Natural killer cell (primary cell): ENCODE measurements at regions of chr13 and their contacts with region 1.

Region 1: DNA sequence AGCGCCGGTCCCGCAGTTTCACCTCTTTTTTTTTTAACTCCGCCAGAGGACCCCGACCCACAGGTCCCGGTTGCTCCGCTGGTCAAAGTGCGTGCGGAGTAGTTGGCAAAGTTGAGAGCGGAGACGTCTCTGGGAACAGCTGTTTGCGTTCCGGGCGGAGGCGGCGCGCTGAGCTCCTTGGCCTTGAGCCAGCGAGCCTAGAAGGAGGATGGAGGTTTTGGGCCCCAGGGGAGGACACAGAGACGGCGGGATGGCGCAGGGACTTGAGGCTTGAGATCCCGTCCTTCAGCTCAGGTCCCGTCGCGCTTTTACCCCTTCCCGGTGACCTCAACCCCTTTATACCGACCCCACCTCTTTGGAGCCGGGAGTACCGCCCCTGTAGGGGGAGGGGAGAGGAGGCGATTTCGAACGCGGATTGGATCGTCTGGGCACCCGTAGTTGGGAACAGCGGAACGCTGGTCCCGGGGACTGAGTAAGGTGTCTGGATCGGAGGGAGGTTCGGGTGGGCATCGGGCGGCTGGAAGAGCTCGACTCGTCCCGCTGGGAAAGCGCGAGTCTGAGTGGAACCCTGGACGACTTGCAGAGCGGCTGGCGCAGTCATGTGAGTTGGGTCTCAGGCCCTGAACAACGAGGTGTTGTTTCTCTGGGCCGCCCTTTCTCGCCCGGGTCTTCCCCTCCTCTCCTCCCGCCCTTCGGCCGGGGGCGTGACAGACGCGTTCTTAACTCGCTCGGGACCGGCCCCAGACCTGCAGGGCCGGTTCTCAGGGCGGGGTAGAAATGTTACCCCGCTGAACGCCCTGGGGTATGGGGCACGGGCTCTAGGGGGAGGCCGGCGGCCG is at the start of gene WBP4:
- DNase-seq: peak; percentile 88 to 94
- ATAC-seq: peak; percentile 79 to 91 (median 80)
- H3K4me3 ChIP-seq: peak within 1 kb of the TSS; percentile 96
- H3K4me3 Mint-ChIP-seq: peak within 1 kb of the TSS; percentile 97
- H3K27ac ChIP-seq: peak within 1 kb of the TSS; percentile 86
- H3K27ac Mint-ChIP-seq: peak within 1 kb of the TSS; percentile 95 to 100
- H3K4me1 ChIP-seq: peaks cover 3% of the 10 kb centered on the region
- H3K4me1 Mint-ChIP-seq: peaks cover 24 to 53% of the 10 kb centered on the region in 2 donors
- H3K27me3 ChIP-seq: no peaks in the 10 kb centered on the region
- H3K27me3 Mint-ChIP-seq: no peaks in the 10 kb centered on the region
- CTCF ChIP-seq: peak; percentile 9
- total RNA-seq, gene WBP4: 4.2 to 6.8 (median 5.1) TPM

Region 2: DNA sequence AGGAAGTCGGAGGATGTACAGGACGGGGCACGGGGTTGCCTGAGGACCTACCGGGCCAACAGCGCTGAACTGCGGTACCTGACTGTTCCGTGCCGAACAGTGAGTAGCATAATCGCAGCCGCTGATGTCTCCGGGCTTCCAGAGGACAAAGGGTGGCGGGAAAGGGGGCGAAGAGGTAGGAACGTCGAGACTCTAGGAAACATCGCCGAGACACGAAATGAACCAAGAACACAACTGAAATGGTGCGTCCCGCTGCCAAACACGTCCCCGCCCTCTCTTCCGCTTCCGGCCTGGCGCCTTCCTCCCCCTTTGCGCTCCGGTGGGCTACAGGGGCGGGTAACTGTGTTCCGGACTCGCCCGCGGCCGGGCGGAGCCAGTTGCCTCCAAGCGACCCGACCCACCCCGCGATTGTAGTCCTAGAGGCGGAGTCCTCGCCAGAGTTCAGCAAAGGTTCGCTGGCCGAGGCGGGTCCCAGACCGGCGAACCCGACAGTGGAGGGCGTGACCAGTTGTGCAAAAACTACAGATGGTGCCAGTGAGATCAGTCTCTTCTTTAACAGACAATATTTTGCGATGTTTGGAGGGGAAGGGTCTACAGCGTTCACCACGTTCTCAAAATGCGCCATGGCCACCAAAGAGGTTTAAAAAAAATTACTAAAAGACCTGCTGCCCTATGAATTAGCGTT is 290.2 kb before region 1 on chr13 and contains the start of gene MRPS31:
- intact Hi-C with region 1: loop called (anchors 10 kb)
- DNase-seq: peak; percentile 93 to 96
- ATAC-seq: peak; percentile 97 to 100 (median 98)
- H3K4me3 ChIP-seq: peak within 1 kb of the TSS; percentile 78
- H3K4me3 Mint-ChIP-seq: peak within 1 kb of the TSS; percentile 97
- H3K27ac ChIP-seq: peak within 1 kb of the TSS; percentile 75
- H3K27ac Mint-ChIP-seq: peak within 1 kb of the TSS; percentile 92 to 95
- H3K4me1 ChIP-seq: peaks cover 13% of the 10 kb centered on the region
- H3K4me1 Mint-ChIP-seq: peaks cover 13 to 19% of the 10 kb centered on the region in 2 donors
- H3K27me3 ChIP-seq: no peaks in the 10 kb centered on the region
- H3K27me3 Mint-ChIP-seq: no peaks in the 10 kb centered on the region
- CTCF ChIP-seq: no peak
- total RNA-seq, gene MRPS31: 13.6 to 19.6 (median 13.8) TPM

Region 3: DNA sequence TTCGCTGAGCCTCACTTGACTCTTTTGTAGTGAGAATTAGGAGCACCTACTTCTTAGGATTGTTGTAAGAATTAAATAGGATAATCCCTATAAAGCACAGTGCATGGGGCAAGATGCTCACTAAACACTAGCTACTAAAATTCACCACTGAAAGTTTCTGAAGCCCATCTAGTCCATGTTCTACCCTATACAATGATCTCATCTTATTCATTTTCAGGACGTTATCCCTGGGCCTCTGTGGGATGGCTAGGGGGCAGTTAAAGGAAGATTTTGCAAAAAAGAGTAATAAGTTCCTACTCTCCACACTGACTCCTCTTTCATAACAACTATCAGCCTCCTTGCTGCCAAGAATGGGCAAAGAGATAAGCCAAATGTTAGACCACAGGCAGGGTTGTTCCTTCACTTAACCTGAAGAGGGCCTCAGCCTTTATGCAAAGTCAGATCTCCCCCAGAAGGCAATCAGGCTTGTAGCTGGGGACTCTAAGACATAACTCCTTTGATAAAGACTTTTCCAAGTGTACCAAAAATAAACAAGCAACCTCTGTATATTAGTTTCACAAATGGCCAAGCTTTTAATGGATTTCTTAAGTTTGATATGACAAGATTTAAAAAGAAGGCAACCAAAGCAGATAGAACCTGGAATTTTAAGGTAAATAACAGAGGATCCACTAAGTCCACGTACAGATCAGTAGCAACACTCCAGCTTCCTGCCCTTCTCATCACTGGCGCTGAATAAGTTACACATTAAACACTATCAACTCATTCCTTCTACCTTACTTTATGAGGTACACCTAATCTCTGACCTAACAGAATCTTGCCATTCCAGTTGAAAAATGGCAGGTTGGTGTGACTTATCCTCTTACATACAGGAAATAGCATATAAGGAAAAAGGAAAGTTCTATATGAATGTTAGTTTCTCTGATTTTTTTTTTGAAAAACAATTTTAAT is 86.6 kb before region 1 on chr13:
- intact Hi-C with region 1: loop called (anchors 2 kb)
- DNase-seq: peak in 1 of 2 donors; percentile 80
- ATAC-seq: peak; percentile 83
- H3K4me3 ChIP-seq: no peak overlapping the region
- H3K4me3 Mint-ChIP-seq: peak overlapping the region; percentile 67
- H3K27ac ChIP-seq: peak overlapping the region; percentile 15
- H3K27ac Mint-ChIP-seq: peak overlapping the region; percentile 87 to 93
- H3K4me1 ChIP-seq: peaks cover 30% of the 10 kb centered on the region
- H3K4me1 Mint-ChIP-seq: peaks cover 94 to 96% of the 10 kb centered on the region in 2 donors
- H3K27me3 ChIP-seq: no peaks in the 10 kb centered on the region
- H3K27me3 Mint-ChIP-seq: no peaks in the 10 kb centered on the region
- CTCF ChIP-seq: peak; percentile 56

Region 4: GRCh38 chr13:41132512-41133152 is 71.3 kb after region 1 on chr13 and contains the start of gene KBTBD6:
- intact Hi-C with region 1: loop called (anchors 1 kb)
- DNase-seq: peak; percentile 86 to 95
- ATAC-seq: peak; percentile 97 to 99 (median 98)
- H3K4me3 ChIP-seq: peak within 1 kb of the TSS; percentile 96
- H3K4me3 Mint-ChIP-seq: peak within 1 kb of the TSS; percentile 98
- H3K27ac ChIP-seq: peak within 1 kb of the TSS; percentile 72
- H3K27ac Mint-ChIP-seq: peak within 1 kb of the TSS; percentile 93 to 96
- H3K4me1 ChIP-seq: peaks cover 14% of the 10 kb centered on the region
- H3K4me1 Mint-ChIP-seq: peaks cover 40 to 41% of the 10 kb centered on the region in 2 donors
- H3K27me3 ChIP-seq: no peaks in the 10 kb centered on the region
- H3K27me3 Mint-ChIP-seq: no peaks in the 10 kb centered on the region
- CTCF ChIP-seq: no peak
- total RNA-seq, gene KBTBD6: 1.7 to 3.2 (median 3.1) TPM

Region 5: DNA sequence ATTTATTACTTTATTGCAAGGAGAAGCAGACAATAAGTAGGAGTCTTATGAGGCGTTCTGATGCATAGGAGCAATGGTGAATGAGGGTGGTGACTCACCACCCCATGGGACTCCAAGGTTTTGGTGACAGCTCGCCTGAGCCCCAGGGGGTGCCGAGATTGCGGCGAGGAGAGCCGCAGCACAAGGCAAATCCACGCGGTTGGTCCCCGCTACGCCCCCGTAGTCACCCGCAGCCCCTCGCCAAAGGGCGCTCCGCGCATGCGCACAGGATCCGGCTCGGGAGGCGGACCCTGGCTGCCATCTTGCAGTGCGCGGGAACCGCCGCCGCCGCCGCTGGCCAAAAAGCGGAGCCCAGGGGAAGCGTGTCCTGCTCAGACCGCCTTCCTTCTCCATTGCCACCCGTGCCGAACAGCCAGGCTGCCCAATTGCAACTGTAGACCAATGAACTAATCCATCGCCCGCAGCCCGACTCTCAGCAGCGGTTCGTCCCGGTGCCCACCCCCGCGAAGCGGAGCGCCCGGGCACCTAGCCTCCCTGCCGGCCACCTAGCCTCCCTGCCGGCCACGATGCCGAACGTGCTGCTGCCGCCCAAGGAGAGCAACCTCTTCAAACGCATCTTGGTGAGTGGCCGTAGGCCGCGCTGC is 249.8 kb after region 1 on chr13 and contains the start of gene NAA16:
- intact Hi-C with region 1: loop called (anchors 2 kb)
- DNase-seq: peak; percentile 93 to 96
- ATAC-seq: peak; percentile 80 to 87 (median 84)
- H3K4me3 ChIP-seq: peak within 1 kb of the TSS; percentile 92
- H3K4me3 Mint-ChIP-seq: peak within 1 kb of the TSS; percentile 96
- H3K27ac ChIP-seq: peak within 1 kb of the TSS; percentile 77
- H3K27ac Mint-ChIP-seq: peak within 1 kb of the TSS; percentile 94 to 96
- H3K4me1 ChIP-seq: peaks cover 26% of the 10 kb centered on the region
- H3K4me1 Mint-ChIP-seq: peaks cover 37 to 41% of the 10 kb centered on the region in 2 donors
- H3K27me3 ChIP-seq: no peaks in the 10 kb centered on the region
- H3K27me3 Mint-ChIP-seq: no peaks in the 10 kb centered on the region
- CTCF ChIP-seq: no peak
- total RNA-seq, gene NAA16: 49.4 to 55.3 (median 53.1) TPM

Region 6: DNA sequence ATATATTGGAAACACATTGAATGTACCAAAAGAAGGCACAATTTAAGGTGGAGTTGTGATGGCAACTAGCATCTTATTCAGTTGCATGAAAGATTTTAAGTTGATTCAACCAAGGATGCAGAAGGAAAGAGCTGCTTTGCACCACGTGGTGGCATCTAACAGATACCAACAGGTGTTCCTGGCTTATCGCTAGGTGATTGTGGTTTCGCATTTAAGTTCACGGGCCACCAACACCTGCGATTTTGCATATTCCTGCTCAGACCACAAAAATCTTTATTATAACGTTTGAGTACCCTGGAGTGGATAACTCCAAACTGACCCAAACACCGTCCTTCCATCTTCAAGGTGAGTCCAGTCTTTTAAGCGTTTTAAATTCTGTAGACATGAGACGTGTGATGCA is 441.4 kb after region 1 on chr13:
- intact Hi-C with region 1: no loop called
- DNase-seq: peak in 1 of 2 donors; percentile 64
- ATAC-seq: no peak
- H3K4me3 ChIP-seq: no peak overlapping the region
- H3K4me3 Mint-ChIP-seq: no peak overlapping the region
- H3K27ac ChIP-seq: no peak overlapping the region
- H3K27ac Mint-ChIP-seq: no peak overlapping the region
- H3K4me1 ChIP-seq: peaks cover 7% of the 10 kb centered on the region
- H3K4me1 Mint-ChIP-seq: peaks cover 11 to 19% of the 10 kb centered on the region in 2 donors
- H3K27me3 ChIP-seq: no peaks in the 10 kb centered on the region
- H3K27me3 Mint-ChIP-seq: no peaks in the 10 kb centered on the region
- CTCF ChIP-seq: no peak